AG04449 (cell line): ENCODE measurements at regions of chr7 and their contacts with region 1.

Region 1: GRCh38 chr7:151368136-151368571 is 26.5 kb downstream of the NUB1 start:
- DNase-seq: no peak
- H3K4me3 ChIP-seq: no peak overlapping the region
- CTCF ChIP-seq: peak; percentile 95

Region 2: GRCh38 chr7:151334628-151335027 is 33.5 kb before region 1 on chr7:
- CTCF ChIA-PET with region 1: no interaction called
- POLR2A ChIA-PET with region 1: no interaction called
- DNase-seq: no peak
- H3K4me3 ChIP-seq: no peak overlapping the region
- CTCF ChIP-seq: no peak

Region 3: DNA sequence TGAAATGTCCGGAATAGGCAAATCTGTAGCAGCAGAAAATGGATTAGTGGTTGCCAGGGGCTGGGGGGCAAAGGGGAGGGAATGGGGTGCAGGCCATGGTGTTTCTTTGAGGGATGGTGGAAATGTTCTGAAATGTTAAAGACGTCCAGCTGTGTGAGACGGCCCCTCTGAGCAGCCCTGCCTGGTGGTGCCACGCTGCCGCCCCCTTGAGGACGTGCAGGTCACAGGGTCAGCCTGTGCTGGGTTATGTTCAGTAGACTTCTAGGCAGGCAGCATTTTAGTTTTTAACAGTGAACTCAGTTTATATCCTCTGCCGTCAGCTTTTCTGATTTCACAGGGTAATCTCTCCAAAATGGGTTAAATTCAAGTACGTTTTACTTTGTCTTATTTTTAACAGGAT is 17.1 kb before region 1 on chr7:
- CTCF ChIA-PET with region 1: interaction called, 144 read pairs
- POLR2A ChIA-PET with region 1: interaction called, 3 read pairs
- DNase-seq: no peak
- H3K4me3 ChIP-seq: no peak overlapping the region
- CTCF ChIP-seq: peak; percentile 1

Region 4: GRCh38 chr7:151378496-151379192 is 10.5 kb after region 1 on chr7:
- CTCF ChIA-PET with region 1: interaction called, 18 read pairs
- POLR2A ChIA-PET with region 1: interaction called, 4 read pairs
- DNase-seq: no peak
- H3K4me3 ChIP-seq: no peak overlapping the region
- CTCF ChIP-seq: no peak

Region 5: DNA sequence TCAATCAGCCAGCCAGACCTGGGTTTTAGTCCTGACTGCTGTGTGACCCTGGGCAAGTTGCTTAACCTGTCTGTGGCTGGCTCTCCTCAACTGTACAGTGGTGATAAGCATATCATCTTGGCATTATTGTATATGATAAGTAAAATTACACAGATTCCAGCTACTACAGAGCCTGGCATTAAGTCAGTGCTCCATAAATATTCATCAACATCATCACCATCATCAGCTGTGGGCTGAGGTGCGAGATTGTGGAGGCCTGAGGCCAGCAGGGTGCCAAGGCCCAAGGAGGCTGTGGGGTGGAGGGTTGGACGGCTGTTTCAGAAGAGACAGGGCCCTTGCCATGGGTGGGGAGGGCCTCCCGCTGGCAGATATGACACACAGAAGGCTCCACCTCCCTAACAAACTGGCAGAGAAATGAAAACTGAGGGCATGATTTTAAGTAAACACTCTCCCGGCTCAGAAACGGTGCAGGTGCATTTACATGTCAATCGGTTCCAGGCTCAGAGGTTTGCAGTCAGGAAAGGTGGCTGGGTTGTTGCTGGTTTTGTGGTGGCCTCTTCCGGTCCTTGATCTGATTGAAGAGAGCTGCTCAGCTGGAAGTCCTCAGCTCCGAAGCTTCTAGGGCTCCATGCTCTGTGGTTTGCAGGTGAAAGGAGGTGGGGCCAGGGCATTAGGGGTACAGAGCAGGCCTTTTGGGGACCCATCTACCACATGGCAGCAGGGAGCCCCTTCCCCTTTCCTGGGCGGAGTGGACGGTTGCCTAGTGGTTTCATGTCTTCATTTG is 61.6 kb after region 1 on chr7:
- CTCF ChIA-PET with region 1: interaction called, 10 read pairs
- POLR2A ChIA-PET with region 1: interaction called, 3 read pairs
- DNase-seq: no peak
- H3K4me3 ChIP-seq: no peak overlapping the region
- CTCF ChIP-seq: no peak

Region 6: DNA sequence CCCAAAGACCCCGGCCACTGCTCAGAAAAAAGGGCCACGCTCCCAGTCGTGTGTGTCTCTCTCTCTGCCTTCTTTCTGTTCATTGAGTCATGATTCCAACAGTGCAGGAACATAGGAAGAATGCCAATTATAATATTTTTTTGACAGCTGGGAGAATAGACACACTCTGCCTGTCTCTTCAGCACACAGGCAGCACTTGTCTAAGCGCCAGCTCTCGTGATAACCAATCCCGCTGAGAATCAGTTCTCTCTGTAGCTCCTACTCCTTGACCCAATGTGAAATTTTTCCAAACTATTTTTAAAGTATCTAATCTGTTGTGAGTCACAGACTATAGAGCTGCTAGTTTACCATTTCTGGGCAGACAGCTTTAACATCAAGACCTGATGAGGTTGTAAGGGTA is 297.2 kb after region 1 on chr7:
- CTCF ChIA-PET with region 1: no interaction called
- POLR2A ChIA-PET with region 1: no interaction called
- DNase-seq: peak; percentile 83
- H3K4me3 ChIP-seq: no peak overlapping the region
- CTCF ChIP-seq: no peak

Region 7: GRCh38 chr7:151877911-151878835 is 510.0 kb after region 1 on chr7:
- CTCF ChIA-PET with region 1: no interaction called
- POLR2A ChIA-PET with region 1: no interaction called
- DNase-seq: no peak
- H3K4me3 ChIP-seq: no peak overlapping the region
- CTCF ChIP-seq: no peak